ENCODE measurements at regions of chr3 and their contacts with region 1.

Region 1: DNA sequence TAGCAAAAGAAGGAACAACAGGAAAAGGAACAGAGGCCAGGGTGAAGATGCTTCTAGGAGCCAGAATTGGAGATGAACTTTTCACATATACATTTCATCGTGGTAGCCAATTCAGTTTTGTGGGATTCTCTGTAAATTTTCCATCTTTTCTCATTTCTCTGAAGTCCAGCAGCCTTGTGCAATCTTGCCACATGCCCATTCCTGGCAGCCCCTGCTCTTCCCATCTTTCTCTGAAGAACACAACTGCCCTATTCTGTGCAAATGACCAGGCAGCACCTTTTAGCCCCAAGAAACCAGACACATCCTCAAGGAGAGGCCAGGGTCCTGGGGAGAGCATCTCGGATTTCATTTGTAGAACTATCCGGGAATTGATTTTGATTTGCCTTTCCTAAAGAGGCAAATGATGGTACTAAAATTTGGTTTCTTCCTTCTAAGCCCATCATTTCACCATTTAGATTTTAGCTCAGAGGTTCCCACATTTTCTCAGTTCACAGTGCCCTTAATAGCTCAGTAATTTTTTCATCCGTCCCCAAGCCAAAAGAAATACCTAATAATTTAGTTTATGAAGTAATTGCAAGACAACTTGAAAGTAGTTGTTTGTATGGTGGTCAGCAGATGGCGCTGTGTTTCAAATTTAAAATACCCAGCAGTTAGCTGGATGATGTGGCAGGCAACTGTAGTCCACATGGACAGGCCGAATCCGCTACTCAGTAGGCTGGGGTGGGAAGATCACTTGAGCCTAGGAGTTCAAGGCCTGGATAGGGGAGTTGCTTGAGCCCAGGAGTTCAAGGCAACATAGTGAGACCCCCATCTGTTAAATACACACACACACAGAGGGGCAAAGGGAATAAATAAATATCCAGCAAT is 61.3 kb upstream of the ACKR4 start:
- DNase-seq: peak; percentile 8
- ATAC-seq: peak; percentile 83
- H3K4me3 ChIP-seq: no peak overlapping the region
- H3K27ac ChIP-seq: no peak overlapping the region
- H3K4me1 ChIP-seq: no peaks in the 10 kb centered on the region
- H3K27me3 ChIP-seq: no peaks in the 10 kb centered on the region
- CTCF ChIP-seq: peak; percentile 43 to 60 (median 58); a peak in 5 of 6 replicates
- EP300 ChIP-seq: no peak
- POLR2A ChIP-seq: no peak
- RAD21 ChIP-seq: peak; percentile 69

Region 2: DNA sequence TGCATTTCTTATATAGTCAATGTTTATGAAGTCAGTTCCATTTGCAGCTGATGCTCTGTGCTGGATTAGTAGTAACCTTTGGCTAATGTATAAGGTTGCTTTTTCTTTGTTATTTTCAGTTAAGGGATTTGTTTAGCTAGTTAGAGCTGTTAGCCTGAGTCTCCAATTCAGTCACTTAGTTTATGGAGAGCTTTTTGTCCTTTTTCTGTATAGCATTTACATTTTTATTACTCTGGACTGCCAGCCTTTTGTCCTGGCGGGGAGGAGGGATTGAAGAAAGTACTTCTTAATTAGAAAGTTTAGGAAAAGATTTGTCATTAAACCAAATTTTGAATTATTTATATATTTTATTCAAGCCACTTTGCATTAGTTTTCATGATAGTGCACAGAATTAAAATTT is 66.5 kb before region 1 on chr3:
- CTCF ChIA-PET with region 1: no interaction called
- POLR2A ChIA-PET with region 1: no interaction called
- RAD21 ChIA-PET with region 1: no interaction called
- SMC1A ChIA-PET with region 1: no interaction called
- in situ Hi-C with region 1: no loop called
- intact Hi-C with region 1: no loop called
- DNase-seq: no peak
- ATAC-seq: no peak
- H3K4me3 ChIP-seq: no peak overlapping the region
- H3K27ac ChIP-seq: no peak overlapping the region
- H3K4me1 ChIP-seq: no peaks in the 10 kb centered on the region
- H3K27me3 ChIP-seq: no peaks in the 10 kb centered on the region
- CTCF ChIP-seq: no peak
- EP300 ChIP-seq: no peak
- POLR2A ChIP-seq: no peak
- RAD21 ChIP-seq: no peak

Region 3: GRCh38 chr3:132522353-132522752 is 13.5 kb before region 1 on chr3:
- CTCF ChIA-PET with region 1: interaction called, 25 read pairs
- POLR2A ChIA-PET with region 1: no interaction called
- RAD21 ChIA-PET with region 1: no interaction called
- SMC1A ChIA-PET with region 1: interaction called, 7 read pairs
- in situ Hi-C with region 1: no loop called
- intact Hi-C with region 1: no loop called
- DNase-seq: peak; percentile 34
- ATAC-seq: peak; percentile 89
- H3K4me3 ChIP-seq: no peak overlapping the region
- H3K27ac ChIP-seq: no peak overlapping the region
- H3K4me1 ChIP-seq: peaks cover 5% of the 10 kb centered on the region; the same call in 1 of the 2 replicates
- H3K27me3 ChIP-seq: no peaks in the 10 kb centered on the region
- CTCF ChIP-seq: no peak
- EP300 ChIP-seq: no peak
- POLR2A ChIP-seq: no peak
- RAD21 ChIP-seq: no peak

Region 4: DNA sequence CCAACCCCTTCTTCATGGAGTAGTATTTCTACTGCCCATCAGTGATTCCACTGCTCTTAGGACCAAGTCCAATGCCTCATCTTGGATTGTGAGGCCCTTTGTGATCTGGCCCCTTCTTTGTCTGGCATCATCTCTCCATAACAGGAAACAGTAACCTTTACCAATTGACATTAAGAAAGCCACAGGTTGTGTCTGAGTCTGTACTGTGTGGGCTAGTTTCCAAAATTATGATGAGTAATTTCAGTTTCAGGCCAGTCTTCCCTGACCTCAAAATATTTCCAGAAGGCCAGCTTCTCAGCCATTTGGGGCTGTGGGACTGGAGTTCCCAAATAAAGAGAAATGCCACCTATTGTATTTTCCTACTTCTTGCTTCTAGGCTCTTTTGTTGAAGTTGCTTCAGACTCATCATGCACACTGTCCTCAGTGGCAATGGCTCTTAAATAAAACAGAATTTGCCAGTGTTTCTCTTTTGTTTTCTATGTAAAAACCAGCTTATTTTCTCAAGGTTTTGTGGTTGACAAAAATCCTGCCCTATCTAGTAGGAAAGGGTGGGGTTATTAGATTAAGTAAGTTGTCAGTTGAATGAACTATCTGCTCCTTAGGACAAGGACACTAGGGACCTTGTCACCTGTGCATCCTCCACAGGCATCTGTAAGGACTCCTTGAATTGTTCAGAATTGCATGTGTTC is 14.2 kb after region 1 on chr3:
- CTCF ChIA-PET with region 1: interaction called, 37 read pairs
- POLR2A ChIA-PET with region 1: interaction called, 3 read pairs
- RAD21 ChIA-PET with region 1: no interaction called
- SMC1A ChIA-PET with region 1: interaction called, 6 read pairs
- in situ Hi-C with region 1: no loop called
- intact Hi-C with region 1: no loop called
- DNase-seq: peak; percentile 9
- ATAC-seq: peak; percentile 86
- H3K4me3 ChIP-seq: no peak overlapping the region
- H3K27ac ChIP-seq: no peak overlapping the region
- H3K4me1 ChIP-seq: peaks cover 16% of the 10 kb centered on the region
- H3K27me3 ChIP-seq: no peaks in the 10 kb centered on the region
- CTCF ChIP-seq: no peak
- EP300 ChIP-seq: no peak
- POLR2A ChIP-seq: no peak
- RAD21 ChIP-seq: no peak

Region 5: GRCh38 chr3:132625613-132626012 is 89.8 kb after region 1 on chr3:
- CTCF ChIA-PET with region 1: interaction called, 11 read pairs
- POLR2A ChIA-PET with region 1: no interaction called
- RAD21 ChIA-PET with region 1: interaction called, 3 read pairs
- SMC1A ChIA-PET with region 1: interaction called, 7 read pairs
- in situ Hi-C with region 1: no loop called
- intact Hi-C with region 1: no loop called
- DNase-seq: no peak
- ATAC-seq: peak; percentile 95
- H3K4me3 ChIP-seq: no peak overlapping the region
- H3K27ac ChIP-seq: 0 out of 2 replicates have a peak overlapping the region, but pooled peaks have one; percentile 25
- H3K4me1 ChIP-seq: peaks cover 12% of the 10 kb centered on the region
- H3K27me3 ChIP-seq: no peaks in the 10 kb centered on the region
- CTCF ChIP-seq: no peak
- EP300 ChIP-seq: no peak; a peak in 1 of 4 replicates
- POLR2A ChIP-seq: no peak
- RAD21 ChIP-seq: no peak

Region 6: GRCh38 chr3:132635052-132635451 is 99.2 kb after region 1 on chr3:
- CTCF ChIA-PET with region 1: interaction called, 203 read pairs
- POLR2A ChIA-PET with region 1: interaction called, 4 read pairs
- RAD21 ChIA-PET with region 1: interaction called, 6 read pairs
- SMC1A ChIA-PET with region 1: interaction called, 100 read pairs
- in situ Hi-C with region 1: loop called (anchors 10 kb)
- intact Hi-C with region 1: no loop called
- DNase-seq: no peak
- ATAC-seq: no peak
- H3K4me3 ChIP-seq: no peak overlapping the region
- H3K27ac ChIP-seq: no peak overlapping the region
- H3K4me1 ChIP-seq: no peaks in the 10 kb centered on the region
- H3K27me3 ChIP-seq: no peaks in the 10 kb centered on the region
- CTCF ChIP-seq: no peak
- EP300 ChIP-seq: no peak
- POLR2A ChIP-seq: no peak
- RAD21 ChIP-seq: no peak

Region 7: GRCh38 chr3:133384331-133385027 is 848.7 kb after region 1 on chr3:
- CTCF ChIA-PET with region 1: interaction called, 4 read pairs
- POLR2A ChIA-PET with region 1: no interaction called
- RAD21 ChIA-PET with region 1: no interaction called
- SMC1A ChIA-PET with region 1: no interaction called
- in situ Hi-C with region 1: loop called (anchors 25 kb)
- intact Hi-C with region 1: no loop called
- DNase-seq: no peak
- ATAC-seq: peak; percentile 97
- H3K4me3 ChIP-seq: no peak overlapping the region
- H3K27ac ChIP-seq: no peak overlapping the region
- H3K4me1 ChIP-seq: no peaks in the 10 kb centered on the region
- H3K27me3 ChIP-seq: no peaks in the 10 kb centered on the region; a peak in 2 of 4 replicates
- CTCF ChIP-seq: peak; percentile 83 to 93 (median 91)
- EP300 ChIP-seq: no peak
- POLR2A ChIP-seq: no peak
- RAD21 ChIP-seq: peak; percentile 75